AG04450 (cell line): ENCODE measurements at regions of chrX and their contacts with region 1.

Region 1: GRCh38 chrX:123833387-123833786 is 26.5 kb upstream of the XIAP start:
- DNase-seq: peak; percentile 1
- H3K4me3 ChIP-seq: no peak overlapping the region
- H3K27ac ChIP-seq: no peak overlapping the region
- H3K27me3 ChIP-seq: no peaks in the 10 kb centered on the region
- CTCF ChIP-seq: peak; percentile 73

Region 2: GRCh38 chrX:123704781-123705180 is 128.6 kb before region 1 on chrX:
- CTCF ChIA-PET with region 1: no interaction called
- POLR2A ChIA-PET with region 1: no interaction called
- DNase-seq: no peak
- H3K4me3 ChIP-seq: no peak overlapping the region
- H3K27ac ChIP-seq: no peak overlapping the region
- H3K27me3 ChIP-seq: no peaks in the 10 kb centered on the region
- CTCF ChIP-seq: no peak

Region 3: DNA sequence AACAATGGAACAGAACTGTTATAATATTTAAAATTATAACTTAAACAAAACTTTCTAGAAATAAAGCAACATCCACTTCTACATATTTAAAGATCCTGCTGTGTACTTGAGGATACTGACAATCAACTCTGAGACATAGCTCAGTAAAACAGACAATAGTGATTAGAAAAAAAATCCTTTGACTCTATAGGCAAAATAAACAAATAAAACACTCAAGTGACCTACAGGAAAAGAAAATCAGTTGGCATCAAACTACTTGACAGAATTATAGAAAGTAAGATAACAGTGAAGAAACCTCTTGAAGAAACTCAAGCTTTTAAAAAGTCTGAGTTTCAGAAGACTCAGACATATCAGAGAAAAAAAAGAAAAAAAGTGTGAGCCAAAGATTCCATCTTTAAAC is 44.6 kb before region 1 on chrX:
- CTCF ChIA-PET with region 1: no interaction called
- POLR2A ChIA-PET with region 1: no interaction called
- DNase-seq: no peak
- H3K4me3 ChIP-seq: no peak overlapping the region
- H3K27ac ChIP-seq: no peak overlapping the region
- H3K27me3 ChIP-seq: no peaks in the 10 kb centered on the region
- CTCF ChIP-seq: no peak

Region 4: DNA sequence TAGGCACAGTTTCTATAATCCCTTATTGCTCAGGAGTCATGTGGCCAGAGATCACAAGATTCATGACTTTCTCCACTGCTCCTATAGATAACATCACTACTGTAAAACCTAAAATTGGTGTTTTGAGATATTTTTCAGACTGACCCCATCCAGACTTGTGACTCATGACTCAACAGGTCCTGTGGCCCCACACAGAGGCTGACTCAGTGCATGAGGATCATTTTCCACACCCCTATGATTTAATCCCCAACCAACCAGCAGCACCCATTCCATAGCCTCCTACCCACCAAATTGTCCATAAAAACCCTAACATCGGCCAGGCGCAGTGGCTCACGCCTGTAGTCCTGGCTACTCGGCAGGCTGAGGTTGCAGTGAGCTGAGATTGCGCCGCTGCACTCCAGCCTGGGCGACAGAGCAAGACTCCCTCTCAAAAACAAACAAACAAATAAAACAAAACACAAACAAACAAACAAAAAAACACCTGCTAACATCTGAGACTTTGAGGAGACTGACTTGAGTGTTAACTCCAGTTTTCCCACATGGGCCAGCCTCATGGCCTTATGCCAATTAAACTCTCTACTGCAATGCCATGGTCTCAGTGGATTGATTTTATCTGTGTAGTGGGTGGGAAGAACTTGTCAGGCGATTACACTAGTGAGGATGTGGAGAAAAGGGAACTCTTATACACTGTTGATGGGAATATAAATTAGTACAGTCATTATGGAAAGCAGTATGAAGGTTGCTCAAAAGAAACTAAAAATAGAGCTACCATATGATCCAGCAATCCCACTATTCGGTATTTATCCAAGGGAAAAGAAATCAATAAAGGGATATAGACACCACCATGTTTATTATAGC is 13.4 kb after region 1 on chrX:
- CTCF ChIA-PET with region 1: interaction called, 12 read pairs
- POLR2A ChIA-PET with region 1: interaction called, 4 read pairs
- DNase-seq: no peak
- H3K4me3 ChIP-seq: no peak overlapping the region
- H3K27ac ChIP-seq: no peak overlapping the region
- H3K27me3 ChIP-seq: no peaks in the 10 kb centered on the region
- CTCF ChIP-seq: no peak

Region 5: DNA sequence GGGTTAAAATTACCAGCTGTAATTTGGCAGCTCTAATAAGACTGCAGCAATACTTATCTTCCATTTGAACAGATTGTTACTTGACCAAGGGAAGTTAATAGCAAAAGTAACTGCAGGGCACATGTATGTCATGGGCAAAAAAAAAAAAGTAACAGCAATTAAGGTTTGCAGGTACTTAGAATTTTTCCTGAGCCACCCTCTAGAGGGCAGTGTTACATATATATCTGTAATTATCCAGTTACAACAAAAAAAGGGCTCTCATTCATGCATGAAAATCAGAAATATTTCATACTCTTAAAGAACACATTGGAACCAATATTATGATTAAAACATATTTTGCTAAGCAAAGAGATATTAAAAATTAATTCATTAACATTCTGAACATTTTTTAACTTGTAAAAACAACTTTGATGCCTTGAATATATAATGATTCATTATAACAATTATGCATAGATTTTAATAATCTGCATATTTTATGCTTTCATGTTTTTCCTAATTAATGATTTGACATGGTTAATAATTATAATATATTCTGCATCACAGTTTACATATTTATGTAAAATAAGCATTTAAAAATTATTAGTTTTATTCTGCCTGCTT is 51.5 kb after region 1 on chrX:
- CTCF ChIA-PET with region 1: interaction called, 15 read pairs
- POLR2A ChIA-PET with region 1: no interaction called
- DNase-seq: no peak
- H3K4me3 ChIP-seq: no peak overlapping the region
- H3K27ac ChIP-seq: no peak overlapping the region
- H3K27me3 ChIP-seq: no peaks in the 10 kb centered on the region
- CTCF ChIP-seq: peak; percentile 51

Region 6: DNA sequence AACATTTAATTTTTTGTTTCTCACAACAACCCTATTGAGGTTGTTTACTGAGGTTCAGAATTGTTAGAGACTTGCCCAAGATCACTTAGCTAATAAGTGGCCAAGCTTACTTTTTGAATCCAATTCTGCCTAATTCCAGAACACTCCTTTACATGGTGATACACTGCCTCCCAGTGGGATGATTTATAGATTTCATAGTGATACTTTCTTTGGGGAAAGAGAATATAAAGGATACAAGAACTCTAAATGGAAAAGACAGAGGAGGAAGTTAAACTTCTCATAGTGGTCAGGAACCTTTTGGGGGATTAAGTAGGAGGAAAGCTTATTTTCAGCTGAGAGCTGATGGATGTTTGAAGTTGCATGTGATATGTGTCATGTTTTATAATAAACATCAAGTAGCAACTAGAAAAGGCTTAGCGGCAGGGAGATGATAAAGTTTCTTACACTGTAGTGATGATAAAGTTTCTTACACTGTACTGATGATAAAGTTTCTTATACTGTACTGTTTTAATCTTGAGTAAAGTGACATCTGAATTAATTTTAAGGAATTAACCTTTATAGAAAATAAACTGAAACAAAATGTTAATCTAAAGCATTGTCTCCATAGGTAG is 143.4 kb after region 1 on chrX:
- CTCF ChIA-PET with region 1: interaction called, 50 read pairs
- POLR2A ChIA-PET with region 1: no interaction called
- DNase-seq: no peak
- H3K4me3 ChIP-seq: no peak overlapping the region
- H3K27ac ChIP-seq: no peak overlapping the region
- H3K27me3 ChIP-seq: no peaks in the 10 kb centered on the region
- CTCF ChIP-seq: peak; percentile 38; the same call in 1 of the 2 replicates